Calu3 (cell line): ENCODE measurements at regions of chr7 and their contacts with region 1.

Region 1: DNA sequence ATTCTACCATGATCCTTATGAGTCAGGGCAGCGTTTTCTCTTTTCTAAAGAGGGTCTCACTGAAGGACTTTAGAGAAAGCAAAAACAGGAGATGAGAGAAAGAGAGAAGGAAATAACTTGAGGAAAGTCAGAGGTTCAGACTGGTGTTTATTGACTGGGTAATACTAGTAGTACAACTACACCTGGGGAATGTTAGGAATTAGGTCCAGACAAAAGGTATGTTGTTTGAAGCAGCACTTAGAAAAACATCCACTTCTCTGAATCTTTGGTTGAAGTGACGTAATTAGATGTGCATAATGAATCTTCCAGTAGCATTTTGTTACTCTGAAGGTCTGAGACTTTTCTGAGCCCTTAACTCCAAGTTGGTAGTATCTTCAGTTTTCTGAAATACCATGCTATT is 380.3 kb upstream of the LRGUK start:
- DNase-seq: peak; percentile 4
- H3K4me3 Mint-ChIP-seq: peak overlapping the region; percentile 56
- H3K27ac Mint-ChIP-seq: peak overlapping the region; percentile 92
- H3K4me1 Mint-ChIP-seq: peaks cover 69% of the 10 kb centered on the region
- H3K27me3 Mint-ChIP-seq: no peaks in the 10 kb centered on the region
- CTCF ChIP-seq: no peak

Region 2: DNA sequence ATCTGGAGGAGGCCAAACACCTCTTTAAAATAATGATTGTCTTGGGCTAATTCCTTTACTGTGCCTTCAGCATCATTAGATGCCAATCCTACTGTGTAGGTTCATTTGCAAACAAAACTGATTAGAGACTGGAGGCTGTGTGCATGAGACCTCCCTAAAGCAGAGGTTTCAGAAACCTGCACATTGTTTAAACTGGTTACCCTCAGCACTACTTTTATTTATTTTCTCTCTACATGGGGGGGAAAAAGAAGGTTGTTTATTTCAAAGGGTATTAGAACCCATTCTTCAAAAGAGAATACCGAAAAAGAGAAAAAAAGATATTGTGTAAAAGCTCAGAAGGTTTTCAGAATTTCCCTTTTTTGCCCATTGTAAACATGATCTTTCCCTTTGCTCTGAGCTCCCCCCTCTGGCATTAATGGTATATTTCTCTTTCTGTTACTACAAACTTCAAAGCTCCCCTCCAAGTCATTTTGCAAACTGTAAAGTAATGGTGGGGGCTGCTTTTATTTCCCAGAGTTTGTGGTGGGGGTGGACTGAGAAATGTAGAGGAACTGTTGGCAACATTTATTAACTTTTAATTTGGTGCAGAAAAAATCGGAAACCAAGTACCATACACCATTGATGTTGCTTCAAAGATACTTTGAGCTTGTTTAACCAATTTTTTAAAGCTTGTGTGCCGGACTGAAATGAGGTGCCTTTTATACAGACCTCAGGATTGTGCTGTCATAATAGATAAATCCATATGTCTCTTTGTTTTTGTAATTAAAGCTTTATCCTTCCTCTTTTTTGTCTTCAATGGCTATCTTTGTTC is 312.6 kb before region 1 on chr7:
- CTCF ChIA-PET with region 1: no interaction called
- intact Hi-C with region 1: no loop called
- DNase-seq: no peak
- H3K4me3 Mint-ChIP-seq: no peak overlapping the region
- H3K27ac Mint-ChIP-seq: no peak overlapping the region
- H3K4me1 Mint-ChIP-seq: peaks cover 15% of the 10 kb centered on the region
- H3K27me3 Mint-ChIP-seq: no peaks in the 10 kb centered on the region
- CTCF ChIP-seq: peak; percentile 30

Region 3: DNA sequence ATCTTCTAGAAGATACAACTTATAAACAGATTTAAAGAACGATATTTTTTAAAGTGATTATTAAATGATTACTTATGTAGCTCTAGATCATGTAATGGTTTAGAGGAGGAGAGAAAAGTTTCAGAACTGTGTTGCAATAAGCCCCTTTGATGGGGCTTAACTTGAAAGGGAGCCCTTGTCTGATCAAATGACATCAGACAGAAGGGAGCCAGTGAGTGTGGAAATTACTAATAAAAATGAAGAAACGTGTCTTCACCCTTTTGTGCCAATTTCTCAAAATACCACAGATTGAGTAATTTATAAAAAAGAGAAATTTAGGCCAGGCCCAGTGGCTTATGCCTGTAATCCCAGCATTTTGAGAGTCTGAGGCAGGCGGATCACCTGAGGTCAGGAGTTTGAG is 175.8 kb before region 1 on chr7:
- CTCF ChIA-PET with region 1: no interaction called
- intact Hi-C with region 1: loop called (anchors 5 kb)
- DNase-seq: no peak
- H3K4me3 Mint-ChIP-seq: no peak overlapping the region
- H3K27ac Mint-ChIP-seq: no peak overlapping the region
- H3K4me1 Mint-ChIP-seq: peaks cover 38% of the 10 kb centered on the region
- H3K27me3 Mint-ChIP-seq: no peaks in the 10 kb centered on the region
- CTCF ChIP-seq: no peak